SK-N-SH (cell line): ENCODE measurements at regions of chr4 and their contacts with region 1.

Region 1: GRCh38 chr4:112327965-112328733 is 31.0 kb downstream of the ALPK1 start:
- DNase-seq: peak; percentile 27
- H3K4me3 ChIP-seq: no peak overlapping the region
- H3K27ac ChIP-seq: no peak overlapping the region; a peak in 1 of 4 replicates
- H3K4me1 ChIP-seq: peaks cover 0 to 12% of the 10 kb centered on the region in 2 experiments; a peak in 2 of 4 replicates
- H3K27me3 ChIP-seq: no peaks in the 10 kb centered on the region
- CTCF ChIP-seq: peak; percentile 69
- EP300 ChIP-seq: no peak
- RAD21 ChIP-seq: peak; percentile 88

Region 2: GRCh38 chr4:112253382-112254000 is 74.7 kb before region 1 on chr4:
- CTCF ChIA-PET with region 1: no interaction called
- POLR2A ChIA-PET with region 1: no interaction called
- DNase-seq: no peak
- H3K4me3 ChIP-seq: no peak overlapping the region
- H3K27ac ChIP-seq: no peak overlapping the region
- H3K4me1 ChIP-seq: peaks cover 0 to 5% of the 10 kb centered on the region in 2 experiments; a peak in 2 of 4 replicates
- H3K27me3 ChIP-seq: no peaks in the 10 kb centered on the region
- CTCF ChIP-seq: no peak
- EP300 ChIP-seq: no peak
- RAD21 ChIP-seq: no peak

Region 3: DNA sequence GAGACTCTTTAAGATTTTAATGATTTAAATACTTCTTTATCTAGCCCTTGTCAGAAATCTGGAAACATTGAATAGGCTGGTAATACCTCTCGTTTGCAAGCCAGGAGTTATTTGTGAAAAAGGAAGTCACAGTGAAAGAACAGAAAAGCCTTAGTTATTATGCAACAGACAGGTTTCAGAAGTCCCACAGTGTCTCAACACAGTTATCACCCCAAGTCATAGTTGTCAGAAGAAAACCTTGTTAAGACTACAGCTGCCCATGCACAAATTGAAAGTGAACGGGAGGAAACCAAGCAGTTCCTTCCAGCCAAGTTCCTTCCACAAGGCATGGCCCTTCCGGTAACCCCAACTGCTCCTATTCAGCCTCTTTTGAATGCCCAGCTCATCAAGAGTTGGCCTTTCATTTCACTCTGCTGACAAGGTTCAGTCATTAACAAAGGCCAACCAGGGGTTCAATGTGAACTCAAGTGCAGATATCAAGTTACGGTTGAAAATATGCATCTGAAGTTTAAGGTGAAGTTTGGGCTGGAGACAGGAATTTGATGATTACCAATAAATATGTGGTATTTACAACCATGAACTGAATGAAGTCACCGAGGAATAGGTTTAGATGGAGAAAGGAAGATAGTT is 15.4 kb before region 1 on chr4:
- CTCF ChIA-PET with region 1: interaction called, 10 read pairs
- POLR2A ChIA-PET with region 1: no interaction called
- DNase-seq: no peak
- H3K4me3 ChIP-seq: no peak overlapping the region
- H3K27ac ChIP-seq: no peak overlapping the region
- H3K4me1 ChIP-seq: no peaks in the 10 kb centered on the region
- H3K27me3 ChIP-seq: no peaks in the 10 kb centered on the region
- CTCF ChIP-seq: no peak
- EP300 ChIP-seq: no peak
- RAD21 ChIP-seq: no peak

Region 4: DNA sequence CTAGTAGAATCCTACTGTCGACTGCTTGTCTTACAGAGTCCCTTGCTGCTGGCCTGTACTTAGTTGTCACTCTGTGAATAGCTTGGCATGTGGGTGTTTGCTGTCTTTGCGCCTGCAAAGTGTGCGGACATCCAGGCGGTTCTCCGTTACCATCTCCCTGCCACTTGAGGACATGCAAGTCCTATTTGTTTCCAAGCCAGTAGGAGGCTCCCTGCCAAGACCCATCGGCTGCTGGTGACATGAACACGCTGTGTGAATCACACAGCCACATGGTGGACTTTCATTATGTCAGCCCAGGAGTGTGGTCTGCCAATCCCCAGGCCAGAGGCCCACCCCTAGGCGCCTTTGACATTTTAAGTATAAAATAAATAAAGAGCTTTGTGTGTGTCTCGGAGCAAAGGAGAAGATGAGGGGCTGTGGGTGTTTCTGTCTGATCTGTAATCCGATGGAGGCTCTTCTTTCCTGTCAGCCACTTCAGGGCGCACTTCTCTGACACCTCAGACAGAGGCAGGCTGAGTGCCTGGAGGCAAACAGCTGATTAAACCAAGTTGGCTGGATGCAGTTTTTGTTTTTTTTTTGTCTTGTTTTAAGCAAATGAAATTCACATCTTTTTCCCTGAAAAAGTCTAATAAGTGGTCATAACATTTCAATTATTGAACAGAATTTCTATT is 20.5 kb after region 1 on chr4:
- CTCF ChIA-PET with region 1: interaction called, 18 read pairs
- POLR2A ChIA-PET with region 1: no interaction called
- DNase-seq: peak; percentile 57
- H3K4me3 ChIP-seq: no peak overlapping the region
- H3K27ac ChIP-seq: no peak overlapping the region; a peak in 1 of 4 replicates
- H3K4me1 ChIP-seq: peaks cover 0 to 6% of the 10 kb centered on the region in 2 experiments; a peak in 2 of 4 replicates
- H3K27me3 ChIP-seq: no peaks in the 10 kb centered on the region
- CTCF ChIP-seq: no peak; the same call in 1 of the 2 replicates
- EP300 ChIP-seq: no peak
- RAD21 ChIP-seq: peak; percentile 50

Region 5: GRCh38 chr4:112515304-112516067 is 187.3 kb after region 1 on chr4:
- CTCF ChIA-PET with region 1: interaction called, 15 read pairs
- POLR2A ChIA-PET with region 1: no interaction called
- DNase-seq: peak; percentile 75
- H3K4me3 ChIP-seq: peak overlapping the region; percentile 56 to 73
- H3K27ac ChIP-seq: peak overlapping the region in 1 of 2 experiments; percentile 34; a peak in 1 of 4 replicates
- H3K4me1 ChIP-seq: peaks cover 14 to 31% of the 10 kb centered on the region in 2 experiments; a peak in 2 of 4 replicates
- H3K27me3 ChIP-seq: peaks cover 50% of the 10 kb centered on the region
- CTCF ChIP-seq: no peak
- EP300 ChIP-seq: no peak
- RAD21 ChIP-seq: 0 out of 2 replicates have a peak, but pooled peaks have one; percentile 2

Region 6: GRCh38 chr4:112589206-112589605 is 261.1 kb after region 1 on chr4:
- CTCF ChIA-PET with region 1: interaction called, 12 read pairs
- POLR2A ChIA-PET with region 1: no interaction called
- DNase-seq: no peak
- H3K4me3 ChIP-seq: no peak overlapping the region
- H3K27ac ChIP-seq: no peak overlapping the region
- H3K4me1 ChIP-seq: peaks cover 0 to 8% of the 10 kb centered on the region in 2 experiments; a peak in 2 of 4 replicates
- H3K27me3 ChIP-seq: no peaks in the 10 kb centered on the region
- CTCF ChIP-seq: no peak
- EP300 ChIP-seq: no peak
- RAD21 ChIP-seq: no peak

Region 7: DNA sequence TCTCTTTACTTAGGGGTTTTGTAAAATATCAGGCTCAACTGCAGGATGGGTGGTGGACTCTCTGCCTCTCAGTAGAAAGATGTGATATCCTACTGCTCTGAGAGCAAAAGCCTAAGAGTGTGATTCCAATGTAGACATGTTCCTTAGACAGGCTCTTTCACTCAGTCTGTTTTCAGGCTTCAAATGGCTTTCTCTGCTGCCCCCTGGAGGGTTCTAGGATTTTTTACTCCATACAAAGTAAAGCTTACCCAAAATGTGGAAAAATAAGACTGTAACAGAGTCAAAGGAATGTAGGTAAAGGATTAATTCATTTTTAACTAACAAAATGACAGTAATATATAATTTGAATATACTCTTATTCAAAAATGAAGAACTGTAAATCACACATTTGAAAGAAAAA is 276.4 kb after region 1 on chr4:
- CTCF ChIA-PET with region 1: interaction called, 172 read pairs
- POLR2A ChIA-PET with region 1: no interaction called
- DNase-seq: peak; percentile 62
- H3K4me3 ChIP-seq: no peak overlapping the region
- H3K27ac ChIP-seq: no peak overlapping the region
- H3K4me1 ChIP-seq: no peaks in the 10 kb centered on the region
- H3K27me3 ChIP-seq: no peaks in the 10 kb centered on the region
- CTCF ChIP-seq: peak; percentile 81
- EP300 ChIP-seq: no peak
- RAD21 ChIP-seq: peak; percentile 97